ENCODE measurements at regions of chr10 and their contacts with region 1.

Region 1: DNA sequence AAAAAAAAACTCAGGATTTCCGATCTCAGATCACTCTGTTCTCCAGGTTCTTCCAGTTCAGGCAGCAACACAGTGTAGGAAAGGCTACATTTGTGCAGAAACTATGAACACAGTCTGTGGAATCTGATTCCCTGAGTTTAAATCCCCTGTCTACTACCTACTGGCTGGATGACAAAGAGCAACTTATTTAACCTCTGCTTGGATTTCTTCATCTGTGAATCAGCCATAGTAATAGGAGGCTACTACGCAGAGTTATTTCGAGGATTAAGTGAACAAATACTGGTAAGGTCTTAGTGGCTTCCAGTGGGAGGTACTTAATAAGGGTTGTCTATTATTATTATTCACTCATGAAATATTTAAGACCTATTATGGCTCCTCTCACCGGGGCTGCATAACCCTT is 44.3 kb upstream of the PDCD4 start:
- DNase-seq: no peak
- H3K4me3 ChIP-seq: no peak overlapping the region
- H3K27ac ChIP-seq: peak overlapping the region; percentile 42 to 86
- H3K4me1 ChIP-seq: peaks cover 13% of the 10 kb centered on the region
- H3K27me3 ChIP-seq: no peaks in the 10 kb centered on the region
- CTCF ChIP-seq: no peak
- POLR2A ChIP-seq: no peak

Region 2: DNA sequence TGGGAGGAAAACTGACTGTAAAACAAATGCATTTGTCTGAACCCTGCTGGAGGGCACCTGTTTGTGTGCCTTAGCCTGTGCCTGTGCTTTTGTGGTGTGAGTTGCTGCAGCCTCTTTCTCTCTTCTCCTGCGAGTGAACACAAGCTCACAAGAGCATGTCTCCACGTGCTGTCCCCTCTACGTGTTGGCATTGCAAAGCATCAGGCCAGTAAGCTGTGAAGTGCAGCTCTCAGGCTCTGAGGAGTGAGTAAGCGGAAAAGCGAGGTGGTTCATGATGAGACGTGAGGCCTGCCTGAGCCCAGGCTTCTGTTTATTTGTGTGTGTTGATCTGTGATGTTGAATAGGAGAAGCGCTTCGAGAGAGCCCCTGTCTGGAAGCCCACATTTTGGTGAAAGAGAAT is 41.2 kb before region 1 on chr10:
- intact Hi-C with region 1: loop called (anchors 5 kb)
- DNase-seq: no peak
- H3K4me3 ChIP-seq: no peak overlapping the region
- H3K27ac ChIP-seq: peak overlapping the region; percentile 43 to 63
- H3K4me1 ChIP-seq: no peaks in the 10 kb centered on the region
- H3K27me3 ChIP-seq: no peaks in the 10 kb centered on the region
- CTCF ChIP-seq: no peak
- POLR2A ChIP-seq: no peak

Region 3: DNA sequence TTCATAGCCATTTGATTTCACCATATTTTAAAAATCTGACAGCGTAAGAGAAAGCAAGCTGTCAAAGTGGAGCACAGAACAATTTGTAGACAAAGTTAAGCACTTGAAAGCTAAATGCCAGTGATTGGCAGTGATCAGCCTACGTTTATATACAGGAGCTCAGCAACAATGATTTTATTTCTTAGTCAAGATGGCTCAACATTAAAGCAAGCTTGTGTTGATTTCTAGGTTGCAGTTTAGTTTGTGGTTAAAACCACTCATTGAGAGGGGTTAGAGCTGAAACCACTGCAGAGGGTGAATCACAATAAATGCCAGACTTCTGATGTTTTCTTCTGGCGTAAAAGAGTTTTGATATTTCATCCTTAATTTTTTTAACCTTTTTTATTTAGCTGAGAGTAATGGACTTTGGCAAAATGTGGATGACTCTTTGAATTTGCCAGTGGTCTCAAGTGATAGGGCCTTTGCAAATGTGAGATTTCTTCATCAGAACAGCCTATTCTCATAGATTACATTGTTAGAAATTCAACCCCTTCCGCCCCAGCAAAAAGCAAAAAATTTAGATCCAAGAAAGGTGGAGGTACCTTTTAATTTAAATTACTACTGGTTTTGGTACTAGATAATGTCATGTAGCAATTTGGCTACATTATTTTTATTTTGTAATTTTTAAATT is 165.7 kb after region 1 on chr10:
- intact Hi-C with region 1: no loop called
- DNase-seq: no peak
- H3K4me3 ChIP-seq: no peak overlapping the region
- H3K27ac ChIP-seq: no peak overlapping the region
- H3K4me1 ChIP-seq: no peaks in the 10 kb centered on the region
- H3K27me3 ChIP-seq: no peaks in the 10 kb centered on the region
- CTCF ChIP-seq: no peak
- POLR2A ChIP-seq: no peak